Activated CD4-positive, alpha-beta T cell treated with anti-CD3 and anti-CD28 coated beads, Interleukin-2, amount 10 ng/mL, durations not matched to agents 24 days and 14 days (primary cell): ENCODE measurements at regions of chr5 and their contacts with region 1.

Region 1: DNA sequence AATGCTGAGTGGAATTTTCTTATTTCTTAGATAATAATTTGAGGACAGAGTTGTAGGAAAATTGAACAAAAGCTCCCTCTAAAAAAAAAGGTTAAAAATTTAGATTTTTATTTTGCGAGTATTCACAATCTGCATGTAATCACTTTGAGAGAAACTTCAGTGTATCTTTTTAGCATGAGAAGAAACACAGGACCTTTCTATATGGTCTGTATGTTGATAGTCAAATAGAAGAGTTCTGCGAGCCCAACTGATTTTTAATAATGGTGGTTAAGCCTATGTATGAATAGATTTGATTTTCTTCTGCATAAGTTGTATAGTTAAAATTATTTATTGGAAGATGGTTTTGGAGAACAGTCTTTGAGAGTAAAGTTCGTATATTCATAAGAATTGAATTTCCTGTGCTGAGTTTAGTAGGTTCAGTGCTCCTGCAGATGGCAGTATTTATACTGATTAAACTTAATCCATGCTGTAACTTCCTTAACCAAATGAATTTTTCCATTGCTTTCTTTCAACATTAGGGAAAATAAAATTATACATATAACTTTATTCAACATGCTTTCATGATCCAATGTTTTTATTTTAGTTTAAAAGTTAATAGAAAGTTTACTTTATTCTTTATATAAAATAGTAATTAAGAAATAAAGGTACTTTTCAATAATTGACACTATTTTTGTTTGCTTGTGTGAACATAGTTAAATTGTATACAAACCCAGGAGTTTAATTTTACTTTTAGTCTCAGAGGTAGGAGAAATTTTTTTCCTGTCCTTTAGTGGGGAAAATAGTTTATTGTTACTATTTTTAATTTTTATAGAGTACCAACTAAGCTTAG is 19.6 kb downstream of the TCERG1 start:
- DNase-seq: no peak
- H3K4me3 Mint-ChIP-seq: no peak overlapping the region
- H3K27ac Mint-ChIP-seq: no peak overlapping the region
- H3K4me1 Mint-ChIP-seq: peaks cover 18% of the 10 kb centered on the region
- H3K27me3 Mint-ChIP-seq: no peaks in the 10 kb centered on the region

Region 2: DNA sequence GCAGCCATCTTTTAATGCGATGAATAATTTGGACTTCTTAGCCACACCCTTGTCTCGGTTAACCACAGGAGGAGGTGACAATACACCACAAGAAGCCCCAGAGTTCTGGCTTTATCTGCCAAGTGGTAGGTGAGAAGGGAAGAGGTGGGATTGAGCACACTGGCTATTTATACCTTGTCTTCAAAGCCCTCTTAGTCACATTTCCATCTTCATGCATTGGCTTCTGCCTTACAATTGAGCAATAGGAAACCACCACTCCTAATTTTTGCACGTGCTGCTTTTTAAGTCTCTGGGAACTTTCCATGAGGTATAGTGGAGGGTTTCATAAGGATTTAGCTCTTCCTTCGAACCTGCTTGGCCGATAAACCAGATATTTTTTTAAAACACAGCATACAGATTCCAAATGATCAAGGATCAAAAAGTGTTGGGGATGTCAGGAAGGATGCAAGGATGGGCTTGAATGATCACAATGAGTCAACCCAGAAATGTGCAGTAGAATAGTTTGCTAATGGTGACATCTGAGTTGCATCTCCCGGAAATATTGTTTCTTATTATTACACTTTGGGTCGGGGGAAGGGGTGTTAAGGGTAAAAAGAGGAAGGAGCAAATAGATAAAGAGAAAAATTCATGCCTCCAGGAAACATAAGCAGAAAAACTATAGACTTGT is 386.9 kb before region 1 on chr5:
- intact Hi-C with region 1: no loop called
- DNase-seq: peak; percentile 63
- H3K4me3 Mint-ChIP-seq: no peak overlapping the region
- H3K27ac Mint-ChIP-seq: no peak overlapping the region
- H3K4me1 Mint-ChIP-seq: peaks cover 18% of the 10 kb centered on the region
- H3K27me3 Mint-ChIP-seq: peaks cover 32% of the 10 kb centered on the region

Region 3: GRCh38 chr5:146151970-146152369 is 314.8 kb before region 1 on chr5:
- intact Hi-C with region 1: loop called (anchors 10 kb)
- DNase-seq: no peak
- H3K4me3 Mint-ChIP-seq: no peak overlapping the region
- H3K27ac Mint-ChIP-seq: no peak overlapping the region
- H3K4me1 Mint-ChIP-seq: no peaks in the 10 kb centered on the region
- H3K27me3 Mint-ChIP-seq: no peaks in the 10 kb centered on the region

Region 4: GRCh38 chr5:146446853-146447733 is 19.6 kb before region 1 on chr5 and contains the start of gene TCERG1:
- intact Hi-C with region 1: loop called (anchors 2 kb)
- DNase-seq: peak; percentile 99
- H3K4me3 Mint-ChIP-seq: peak within 1 kb of the TSS; percentile 100
- H3K27ac Mint-ChIP-seq: peak within 1 kb of the TSS; percentile 100
- H3K4me1 Mint-ChIP-seq: peaks cover 27% of the 10 kb centered on the region
- H3K27me3 Mint-ChIP-seq: peaks cover 3% of the 10 kb centered on the region
- total RNA-seq, gene TCERG1: 146 and 155 TPM in 2 replicates